ENCODE measurements at regions of chr9 and their contacts with region 1.

Region 1: DNA sequence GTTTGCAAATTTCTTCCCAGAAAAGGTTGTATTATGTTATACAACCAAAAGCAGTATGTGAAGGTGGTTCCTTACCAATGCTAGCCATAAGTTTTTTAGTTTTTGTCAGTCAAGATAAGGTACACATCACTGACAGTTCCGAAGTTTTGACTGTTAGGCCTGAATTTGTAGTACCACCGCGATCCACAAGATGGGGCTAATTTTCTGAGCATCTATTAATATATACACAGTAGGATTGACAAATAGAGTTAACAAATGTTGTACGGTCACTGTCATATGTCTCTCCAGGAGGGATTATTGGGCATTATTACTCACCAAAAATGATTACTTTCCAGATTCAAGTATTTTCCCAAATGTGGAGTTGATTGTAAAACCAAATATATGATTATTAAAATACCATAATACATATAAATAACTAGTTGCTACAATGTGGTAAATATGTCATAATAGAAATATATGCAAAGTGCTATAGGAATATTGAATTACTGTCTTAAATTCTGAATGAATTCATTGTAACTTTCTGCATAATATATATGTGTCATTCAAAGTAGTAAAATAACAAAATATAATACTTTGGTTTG is 28.4 kb upstream of the LRRC19 start:
- DNase-seq: peak; percentile 55

Region 2: DNA sequence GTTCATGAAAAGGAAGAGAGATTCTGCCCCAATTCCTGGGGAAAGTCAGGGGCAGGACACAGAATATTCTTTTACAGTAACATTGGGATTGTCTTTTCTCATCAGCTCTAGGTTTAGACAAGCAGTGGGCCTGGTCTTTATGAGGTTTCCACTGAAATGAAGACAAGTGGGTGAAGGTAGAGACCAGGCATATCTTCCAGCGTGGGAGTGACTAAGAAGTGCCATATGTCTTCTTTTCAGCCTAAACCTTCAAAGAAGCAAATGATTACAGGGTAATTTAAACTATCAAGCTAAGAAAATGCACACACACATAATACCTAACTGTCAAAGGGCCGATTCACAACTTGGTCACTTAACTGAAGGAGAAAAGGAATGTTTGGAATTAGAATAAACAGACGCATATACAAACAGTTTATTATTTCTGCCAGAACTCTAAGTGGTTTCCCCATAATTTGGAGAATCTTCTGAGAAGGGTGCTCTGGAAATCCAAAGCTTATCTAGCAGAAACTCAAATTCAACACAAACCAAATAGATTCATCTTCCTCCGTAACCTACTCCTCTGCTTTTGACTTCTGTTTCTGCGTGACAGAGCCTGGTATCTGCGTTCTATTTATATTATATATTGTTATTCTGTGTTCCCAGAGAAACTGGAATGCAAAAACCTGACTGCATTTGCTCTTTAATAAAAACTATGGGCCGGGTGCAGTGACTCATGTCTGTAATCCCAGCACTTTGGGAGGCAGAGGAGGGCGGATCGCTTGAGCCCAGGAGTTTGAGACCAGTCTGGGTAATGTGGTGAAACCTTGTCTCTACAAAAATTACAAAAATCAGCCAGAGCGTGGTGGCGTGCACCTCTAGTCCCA is 53.1 kb after region 1 on chr9:
- in situ Hi-C with region 1: no loop called
- DNase-seq: no peak

Region 3: GRCh38 chr9:27261517-27262211 is 227.8 kb after region 1 on chr9:
- in situ Hi-C with region 1: loop called (anchors 25 kb)
- DNase-seq: no peak

Measured in KBM-7 (cell line).